ENCODE measurements at regions of chr20 and their contacts with region 1.

Region 1: GRCh38 chr20:31630187-31630790 is 7.4 kb upstream of the COX4I2 start:
- DNase-seq: no peak
- H3K27ac ChIP-seq: peak overlapping the region; percentile 34
- CTCF ChIP-seq: no peak

Region 2: DNA sequence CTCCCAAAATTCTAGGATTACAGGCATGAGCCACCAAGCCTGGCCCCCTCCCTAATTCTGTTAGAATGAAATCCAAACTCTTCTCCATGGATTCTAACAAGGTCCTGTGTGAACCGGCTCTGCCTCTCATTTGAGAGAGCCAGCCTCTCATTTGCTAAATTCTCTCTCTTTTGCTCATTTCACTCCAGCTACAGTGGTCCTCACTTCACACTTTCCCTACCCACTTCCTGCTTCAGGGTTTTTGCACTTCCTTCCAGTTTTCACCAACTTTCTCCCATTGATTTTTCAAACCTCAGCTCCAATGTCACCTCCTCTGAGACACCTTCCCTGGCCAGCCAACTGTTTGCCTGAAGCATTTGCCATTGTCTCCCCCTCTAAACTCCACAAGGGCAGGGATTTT is 12.5 kb after region 1 on chr20:
- CTCF ChIA-PET with region 1: interaction called, 11 read pairs
- POLR2A ChIA-PET with region 1: no interaction called
- DNase-seq: no peak
- H3K27ac ChIP-seq: no peak overlapping the region
- CTCF ChIP-seq: no peak

Region 3: GRCh38 chr20:31652917-31653396 is 22.7 kb after region 1 on chr20:
- CTCF ChIA-PET with region 1: interaction called, 11 read pairs
- POLR2A ChIA-PET with region 1: no interaction called
- DNase-seq: no peak
- H3K27ac ChIP-seq: peak overlapping the region; percentile 77
- CTCF ChIP-seq: no peak

Region 4: DNA sequence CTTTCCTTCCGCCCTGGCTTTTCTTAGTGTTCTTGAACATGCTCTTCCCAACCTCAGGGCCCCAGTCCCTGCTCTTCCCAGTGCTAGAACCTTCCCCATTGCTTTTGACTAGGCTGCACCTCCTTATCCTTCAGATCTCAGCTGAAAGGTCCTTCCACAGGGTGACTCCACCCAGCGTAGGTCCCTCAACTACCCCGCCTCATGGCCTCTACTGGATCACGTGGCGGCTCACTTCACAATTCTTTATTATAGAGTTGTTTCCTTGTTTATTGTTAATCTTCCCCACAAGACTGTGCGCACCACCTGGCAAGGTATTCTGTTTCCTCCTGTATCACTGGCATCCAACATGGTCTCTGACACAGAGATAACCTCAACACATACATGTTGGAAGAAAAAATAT is 271.3 kb after region 1 on chr20:
- CTCF ChIA-PET with region 1: no interaction called
- POLR2A ChIA-PET with region 1: no interaction called
- DNase-seq: no peak
- H3K27ac ChIP-seq: no peak overlapping the region
- CTCF ChIP-seq: no peak

Measured in RWPE1 (cell line).